GM12878 (cell line): ENCODE measurements at regions of chr7 and their contacts with region 1.

Region 1: DNA sequence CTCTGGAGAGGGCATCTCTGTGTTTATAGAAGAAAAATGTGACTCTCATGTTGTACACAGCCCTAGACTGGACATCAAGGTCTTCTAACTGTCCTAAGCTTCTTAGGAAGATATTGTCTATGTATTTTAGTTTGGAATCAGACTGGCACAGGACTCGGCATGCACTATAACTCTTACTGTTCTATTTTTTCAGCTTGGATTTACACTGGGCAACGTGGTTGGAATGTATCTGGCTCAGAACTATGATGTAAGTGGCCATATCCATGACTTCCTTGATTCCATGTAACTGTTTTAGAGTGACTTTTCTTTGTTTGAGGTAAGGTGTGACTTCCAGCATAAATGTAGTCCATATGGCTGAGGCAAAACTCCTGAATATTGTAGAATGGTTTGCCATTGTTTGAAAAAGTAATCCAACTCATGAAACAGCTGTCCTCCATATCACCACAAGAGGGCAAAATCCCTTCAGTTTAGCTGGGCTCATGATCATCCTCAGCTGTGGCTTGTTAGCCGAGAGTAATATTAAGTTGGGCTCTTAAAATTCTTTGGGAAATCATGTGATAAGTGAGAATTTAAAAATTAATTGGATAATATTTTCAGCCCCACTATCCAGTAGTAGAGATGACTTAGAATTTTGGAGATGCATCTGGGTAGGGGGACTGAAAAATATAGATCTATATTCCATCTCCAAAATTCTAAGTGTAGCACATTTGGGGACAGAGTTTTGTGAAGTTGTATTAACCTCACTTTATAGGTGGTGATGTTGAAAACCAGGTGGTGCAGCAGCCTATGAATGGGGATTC is 10.4 kb downstream of the STMP1 start:
- DNase-seq: no peak
- ATAC-seq: peak; percentile 91
- H3K4me3 ChIP-seq: no peak overlapping the region
- H3K27ac ChIP-seq: no peak overlapping the region
- H3K4me1 ChIP-seq: no peaks in the 10 kb centered on the region; the same call in 1 of the 2 replicates
- H3K27me3 ChIP-seq: no peaks in the 10 kb centered on the region
- CTCF ChIP-seq: peak; percentile 65 to 82 (median 68)
- EP300 ChIP-seq: no peak
- POLR2A ChIP-seq: no peak
- RAD21 ChIP-seq: peak; percentile 71

Region 2: GRCh38 chr7:135662373-135663114 is 10.2 kb before region 1 on chr7 and contains the start of gene STMP1:
- CTCF ChIA-PET with region 1: interaction called, 89 read pairs
- POLR2A ChIA-PET with region 1: interaction called, 17 read pairs
- RAD21 ChIA-PET with region 1: interaction called, 7 read pairs
- SMC1A ChIA-PET with region 1: interaction called, 21 read pairs
- in situ Hi-C with region 1: no loop called
- intact Hi-C with region 1: no loop called
- DNase-seq: peak; percentile 66
- ATAC-seq: peak; percentile 93
- H3K4me3 ChIP-seq: peak within 1 kb of the TSS; percentile 100
- H3K27ac ChIP-seq: peak within 1 kb of the TSS; percentile 68
- H3K4me1 ChIP-seq: peaks cover 2% of the 10 kb centered on the region; the same call in 1 of the 2 replicates
- H3K27me3 ChIP-seq: no peaks in the 10 kb centered on the region
- CTCF ChIP-seq: peak in 2 of 3 experiments; percentile 74 to 78; a peak in 4 of 6 replicates
- EP300 ChIP-seq: 0 out of 4 replicates have a peak, but pooled peaks of 1 of the 2 experiments have one; percentile 22
- POLR2A ChIP-seq: peak; percentile 97
- RAD21 ChIP-seq: peak; percentile 47
- polyA plus RNA-seq, gene STMP1: 63.3 to 79.9 TPM

Region 3: GRCh38 chr7:135684136-135684535 is 11.4 kb after region 1 on chr7:
- CTCF ChIA-PET with region 1: interaction called, 55 read pairs
- POLR2A ChIA-PET with region 1: interaction called, 3 read pairs
- RAD21 ChIA-PET with region 1: no interaction called
- SMC1A ChIA-PET with region 1: interaction called, 18 read pairs
- in situ Hi-C with region 1: no loop called
- intact Hi-C with region 1: no loop called
- DNase-seq: no peak
- ATAC-seq: no peak
- H3K4me3 ChIP-seq: no peak overlapping the region
- H3K27ac ChIP-seq: no peak overlapping the region
- H3K4me1 ChIP-seq: no peaks in the 10 kb centered on the region
- H3K27me3 ChIP-seq: no peaks in the 10 kb centered on the region
- CTCF ChIP-seq: no peak
- EP300 ChIP-seq: no peak
- POLR2A ChIP-seq: no peak
- RAD21 ChIP-seq: no peak

Region 4: GRCh38 chr7:135710417-135711138 is 37.8 kb after region 1 on chr7:
- CTCF ChIA-PET with region 1: interaction called, 56 read pairs
- POLR2A ChIA-PET with region 1: interaction called, 3 read pairs
- RAD21 ChIA-PET with region 1: interaction called, 6 read pairs
- SMC1A ChIA-PET with region 1: interaction called, 15 read pairs
- in situ Hi-C with region 1: no loop called
- intact Hi-C with region 1: loop called (anchors 1 kb)
- DNase-seq: no peak
- ATAC-seq: peak; percentile 76
- H3K4me3 ChIP-seq: no peak overlapping the region
- H3K27ac ChIP-seq: no peak overlapping the region
- H3K4me1 ChIP-seq: no peaks in the 10 kb centered on the region
- H3K27me3 ChIP-seq: no peaks in the 10 kb centered on the region
- CTCF ChIP-seq: peak; percentile 21 to 83 (median 45); a peak in 4 of 6 replicates
- EP300 ChIP-seq: no peak
- POLR2A ChIP-seq: no peak
- RAD21 ChIP-seq: 0 out of 2 replicates have a peak, but pooled peaks have one; percentile 3

Region 5: GRCh38 chr7:135789956-135790355 is 117.2 kb after region 1 on chr7:
- CTCF ChIA-PET with region 1: no interaction called
- POLR2A ChIA-PET with region 1: no interaction called
- RAD21 ChIA-PET with region 1: no interaction called
- SMC1A ChIA-PET with region 1: no interaction called
- in situ Hi-C with region 1: no loop called
- intact Hi-C with region 1: loop called (anchors 5 kb)
- DNase-seq: no peak
- ATAC-seq: no peak
- H3K4me3 ChIP-seq: no peak overlapping the region
- H3K27ac ChIP-seq: no peak overlapping the region
- H3K4me1 ChIP-seq: no peaks in the 10 kb centered on the region
- H3K27me3 ChIP-seq: no peaks in the 10 kb centered on the region; a peak in 1 of 4 replicates
- CTCF ChIP-seq: no peak
- EP300 ChIP-seq: no peak
- POLR2A ChIP-seq: no peak
- RAD21 ChIP-seq: no peak